Body of pancreas (tissue), 4 donors: ENCODE measurements at regions of chr12 and their contacts with region 1.

Region 1: GRCh38 chr12:3299929-3300832 is 190.8 kb upstream of the PRMT8 start:
- DNase-seq: peak; percentile 92 to 95 (median 94)
- ATAC-seq: peak; percentile 79
- H3K4me3 ChIP-seq: no peak overlapping the region
- H3K27ac ChIP-seq: peak overlapping the region; percentile 73 to 87 (median 82)
- H3K4me1 ChIP-seq: peaks cover 43% of the 10 kb centered on the region
- H3K27me3 ChIP-seq: no peaks in the 10 kb centered on the region
- CTCF ChIP-seq: peak; percentile 80 to 97 (median 94)
- POLR2A ChIP-seq: peak in 2 of 3 donors; percentile 30 to 37

Region 2: GRCh38 chr12:3014641-3015040 is 285.5 kb before region 1 on chr12:
- intact Hi-C with region 1: no loop called
- DNase-seq: no peak
- ATAC-seq: no peak
- H3K4me3 ChIP-seq: no peak overlapping the region
- H3K27ac ChIP-seq: no peak overlapping the region
- H3K4me1 ChIP-seq: no peaks in the 10 kb centered on the region
- H3K27me3 ChIP-seq: no peaks in the 10 kb centered on the region
- CTCF ChIP-seq: no peak
- POLR2A ChIP-seq: no peak

Region 3: GRCh38 chr12:3389986-3390385 is 89.8 kb after region 1 on chr12:
- intact Hi-C with region 1: no loop called
- DNase-seq: no peak
- ATAC-seq: no peak
- H3K4me3 ChIP-seq: no peak overlapping the region
- H3K27ac ChIP-seq: no peak overlapping the region
- H3K4me1 ChIP-seq: no peaks in the 10 kb centered on the region
- H3K27me3 ChIP-seq: no peaks in the 10 kb centered on the region
- CTCF ChIP-seq: no peak
- POLR2A ChIP-seq: no peak

Region 4: GRCh38 chr12:3453990-3454675 is 154.0 kb after region 1 on chr12:
- intact Hi-C with region 1: loop called (anchors 5 kb)
- DNase-seq: no peak
- ATAC-seq: no peak
- H3K4me3 ChIP-seq: no peak overlapping the region
- H3K27ac ChIP-seq: no peak overlapping the region
- H3K4me1 ChIP-seq: no peaks in the 10 kb centered on the region
- H3K27me3 ChIP-seq: no peaks in the 10 kb centered on the region
- CTCF ChIP-seq: no peak
- POLR2A ChIP-seq: no peak

Region 5: GRCh38 chr12:3777206-3777809 is 477.1 kb after region 1 on chr12:
- intact Hi-C with region 1: loop called (anchors 10 kb)
- DNase-seq: peak in 1 of 4 donors; percentile 44
- ATAC-seq: no peak
- H3K4me3 ChIP-seq: no peak overlapping the region
- H3K27ac ChIP-seq: no peak overlapping the region
- H3K4me1 ChIP-seq: no peaks in the 10 kb centered on the region
- H3K27me3 ChIP-seq: no peaks in the 10 kb centered on the region
- CTCF ChIP-seq: peak; percentile 36 to 82 (median 77)
- POLR2A ChIP-seq: no peak

Region 6: GRCh38 chr12:3797531-3798049 is 497.4 kb after region 1 on chr12:
- intact Hi-C with region 1: loop called (anchors 5 kb)
- DNase-seq: no peak
- ATAC-seq: no peak
- H3K4me3 ChIP-seq: no peak overlapping the region
- H3K27ac ChIP-seq: no peak overlapping the region
- H3K4me1 ChIP-seq: peaks cover 3% of the 10 kb centered on the region
- H3K27me3 ChIP-seq: no peaks in the 10 kb centered on the region
- CTCF ChIP-seq: peak in 1 of 7 experiments; percentile 4
- POLR2A ChIP-seq: no peak